ENCODE measurements at regions of chr20 and their contacts with region 1.

Region 1: DNA sequence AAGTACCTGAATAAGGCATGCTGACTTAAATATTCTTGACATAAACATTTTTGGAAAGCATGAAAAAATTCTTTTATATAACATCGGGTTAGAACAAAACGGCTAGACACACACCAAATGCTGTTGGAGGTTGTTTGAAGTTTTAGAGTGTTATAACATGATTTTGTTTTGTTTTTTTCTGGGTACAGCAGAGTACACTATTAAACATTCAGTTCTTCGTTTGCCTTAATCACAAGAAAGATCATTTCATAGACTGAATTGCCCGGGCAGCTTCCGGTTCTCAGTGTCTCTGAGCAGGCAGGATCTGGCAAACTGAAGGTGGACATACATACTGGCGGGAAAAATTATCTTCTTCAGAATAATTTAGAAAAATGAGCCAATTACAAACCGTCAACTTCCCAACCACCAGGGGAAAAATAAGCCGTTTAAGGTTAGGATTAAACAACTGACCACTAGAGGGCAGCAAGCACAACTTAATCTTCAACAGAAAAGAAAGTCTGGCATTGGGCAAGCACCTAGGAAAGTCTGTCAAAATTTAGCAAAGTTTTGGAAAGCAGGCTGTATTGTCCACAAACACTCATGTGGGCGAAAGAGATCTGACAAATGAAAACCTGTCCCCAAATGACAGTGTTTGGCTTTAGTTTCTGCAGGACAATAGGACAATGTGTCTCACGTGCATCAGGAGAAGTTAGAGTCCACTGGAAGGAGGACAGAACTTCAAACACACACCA is 15.0 kb downstream of the ZNF217 start:
- DNase-seq: no peak
- ATAC-seq: peak; percentile 81
- H3K4me3 ChIP-seq: no peak overlapping the region
- H3K27ac ChIP-seq: no peak overlapping the region
- H3K4me1 ChIP-seq: no peaks in the 10 kb centered on the region
- H3K27me3 ChIP-seq: no peaks in the 10 kb centered on the region

Region 2: DNA sequence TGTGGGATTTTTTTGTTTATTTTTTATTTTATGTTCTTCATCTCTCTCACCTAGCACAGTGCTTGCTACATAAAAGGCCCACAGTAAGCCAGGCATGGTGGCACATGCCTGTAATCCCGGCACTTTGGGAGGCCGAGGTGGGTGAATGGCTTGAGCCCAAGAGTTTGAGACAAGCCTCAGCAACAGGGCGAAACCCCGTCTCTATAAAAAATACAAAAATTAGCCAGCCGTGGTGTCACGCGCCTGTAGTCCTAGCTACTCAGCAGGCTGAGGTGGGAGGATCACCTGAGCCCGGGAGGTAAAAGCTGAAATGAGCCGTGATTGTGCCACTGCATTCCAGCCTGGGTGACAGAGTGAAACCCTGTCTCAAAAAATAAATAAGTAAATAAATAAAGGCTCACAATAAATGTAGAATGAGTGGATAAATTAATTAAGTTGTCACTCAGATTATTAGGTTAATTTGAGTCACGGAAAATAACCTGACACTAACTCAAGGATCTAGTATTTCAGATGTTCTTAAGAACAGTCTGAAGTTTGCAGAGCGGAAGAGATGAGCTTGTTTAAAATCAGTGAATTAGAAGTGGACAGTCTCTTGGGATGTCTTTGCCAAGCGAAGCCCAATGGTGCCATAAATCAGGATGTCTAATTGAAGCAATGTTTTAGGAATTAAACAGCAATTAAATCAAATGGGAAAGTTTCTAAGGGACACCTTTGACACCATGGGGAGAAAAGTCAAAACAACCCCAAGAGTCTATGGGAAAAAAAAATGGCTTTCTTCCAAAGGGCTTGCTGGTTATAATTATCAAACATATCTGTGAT is 199.4 kb before region 1 on chr20:
- intact Hi-C with region 1: no loop called
- DNase-seq: no peak
- ATAC-seq: no peak
- H3K4me3 ChIP-seq: no peak overlapping the region
- H3K27ac ChIP-seq: no peak overlapping the region
- H3K4me1 ChIP-seq: no peaks in the 10 kb centered on the region
- H3K27me3 ChIP-seq: no peaks in the 10 kb centered on the region

Region 3: GRCh38 chr20:53828682-53829254 is 250.1 kb after region 1 on chr20:
- intact Hi-C with region 1: loop called in 1 of 2 experiments (anchors 10 kb)
- DNase-seq: no peak
- ATAC-seq: peak; percentile 84
- H3K4me3 ChIP-seq: peak overlapping the region; percentile 51 to 67
- H3K27ac ChIP-seq: peak overlapping the region; percentile 90 to 95
- H3K4me1 ChIP-seq: peaks cover 0 to 4% of the 10 kb centered on the region in 2 donors
- H3K27me3 ChIP-seq: no peaks in the 10 kb centered on the region

Region 4: GRCh38 chr20:53915446-53916172 is 337.0 kb after region 1 on chr20:
- intact Hi-C with region 1: loop called (anchors 5 kb)
- DNase-seq: peak; percentile 97 to 99
- ATAC-seq: peak; percentile 96
- H3K4me3 ChIP-seq: peak overlapping the region; percentile 20 to 75
- H3K27ac ChIP-seq: peak overlapping the region in 1 of 2 donors; percentile 52
- H3K4me1 ChIP-seq: no peaks in the 10 kb centered on the region
- H3K27me3 ChIP-seq: no peaks in the 10 kb centered on the region

Region 5: DNA sequence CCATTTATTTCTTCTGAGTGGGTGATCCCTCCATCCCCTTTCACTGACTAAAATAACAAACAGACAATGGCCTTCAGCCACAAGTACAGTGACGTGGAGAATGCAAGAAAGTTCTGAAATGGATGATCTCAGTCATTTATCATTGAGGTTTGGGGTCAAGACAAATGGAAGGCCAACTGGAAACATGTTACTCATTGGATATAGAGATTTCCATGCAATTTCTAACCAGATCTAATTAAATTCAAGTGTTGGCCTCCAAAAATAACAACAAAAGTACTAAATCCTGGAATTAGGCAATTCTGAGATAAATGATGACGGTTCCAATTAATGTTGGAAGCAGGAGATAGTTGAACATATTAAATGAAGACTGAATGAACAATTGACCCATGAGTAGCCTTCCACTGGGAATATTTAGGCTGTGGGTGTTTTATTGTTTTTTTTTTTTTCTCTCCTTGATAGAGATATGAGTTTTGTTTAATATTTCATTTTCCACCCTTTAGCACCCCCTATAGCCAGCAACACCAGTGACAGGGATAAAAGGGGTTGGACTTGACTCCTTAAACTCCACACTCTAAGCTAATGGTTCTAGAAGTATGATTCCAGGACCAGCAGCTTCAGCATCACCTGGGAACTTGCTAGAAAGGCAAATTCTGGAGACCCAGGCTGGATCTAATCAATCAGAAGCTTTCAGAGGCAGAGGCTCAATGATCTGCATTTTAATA is 379.0 kb after region 1 on chr20:
- intact Hi-C with region 1: no loop called
- DNase-seq: no peak
- ATAC-seq: peak; percentile 60
- H3K4me3 ChIP-seq: no peak overlapping the region
- H3K27ac ChIP-seq: no peak overlapping the region
- H3K4me1 ChIP-seq: no peaks in the 10 kb centered on the region
- H3K27me3 ChIP-seq: no peaks in the 10 kb centered on the region

Region 6: DNA sequence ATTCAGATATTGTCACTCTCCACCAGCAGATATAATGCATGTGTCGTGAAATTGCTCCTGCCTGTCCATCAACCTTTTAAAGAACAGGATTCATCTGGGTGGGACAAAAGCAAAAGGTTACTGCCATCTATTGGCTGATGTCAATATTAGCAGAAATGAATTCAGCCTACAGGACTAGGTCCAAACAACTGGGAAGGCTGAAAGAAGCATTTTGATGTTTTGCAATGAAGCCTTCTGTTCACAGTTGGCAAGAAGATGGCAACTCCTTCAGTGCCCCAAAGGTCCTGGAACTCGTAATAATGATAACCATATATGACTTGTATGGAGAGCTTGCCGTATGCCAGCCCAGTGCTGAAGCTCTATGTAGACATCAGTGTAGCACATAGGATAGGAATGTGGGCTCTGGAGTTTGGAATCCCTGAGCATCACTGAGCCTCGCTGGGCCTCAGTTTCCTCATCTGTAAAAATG is 484.2 kb after region 1 on chr20:
- intact Hi-C with region 1: loop called (anchors 5 kb)
- DNase-seq: no peak
- ATAC-seq: peak; percentile 74
- H3K4me3 ChIP-seq: no peak overlapping the region
- H3K27ac ChIP-seq: no peak overlapping the region
- H3K4me1 ChIP-seq: no peaks in the 10 kb centered on the region
- H3K27me3 ChIP-seq: no peaks in the 10 kb centered on the region

Region 7: DNA sequence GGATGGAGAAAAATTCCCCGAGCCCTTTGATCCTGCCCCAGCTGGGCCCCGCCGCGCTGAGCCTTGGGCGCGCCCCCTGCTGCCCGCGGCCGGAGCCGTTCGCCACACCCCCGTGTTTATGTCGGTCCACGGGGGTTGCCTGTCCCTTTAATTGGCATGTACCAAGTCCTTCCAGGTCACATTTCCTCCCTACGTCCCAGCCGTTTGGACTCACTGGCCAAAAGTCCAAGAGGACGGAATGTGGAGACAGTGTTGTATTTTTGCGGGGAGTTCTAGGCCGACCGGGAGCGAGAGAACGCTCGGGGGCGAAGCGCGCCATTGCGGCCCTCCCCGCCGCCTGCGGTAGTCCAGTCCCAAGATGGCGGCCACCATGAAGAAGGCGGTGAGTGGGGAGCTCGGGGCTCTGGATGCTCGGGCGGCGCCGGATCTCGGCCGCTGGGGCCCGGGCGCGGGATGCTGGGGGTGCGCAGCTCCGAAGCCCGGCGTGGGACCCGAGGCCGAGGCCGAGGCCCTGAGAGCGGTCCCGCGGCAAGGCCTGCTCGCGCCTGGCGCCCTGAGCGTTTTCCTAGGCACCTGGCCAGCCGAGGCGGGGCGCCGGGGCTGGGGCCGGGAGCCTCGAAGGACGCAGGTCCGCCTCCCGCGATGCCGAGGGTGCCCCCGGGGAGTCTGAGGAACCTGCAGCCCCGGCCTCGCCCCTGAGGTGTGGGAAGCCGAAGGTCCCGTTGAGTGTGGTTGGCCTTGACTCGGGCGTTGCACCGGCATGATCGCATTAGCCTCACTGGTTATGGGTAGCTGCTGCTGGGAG is 629.3 kb after region 1 on chr20 and contains the start of gene PFDN4:
- intact Hi-C with region 1: loop called in 1 of 2 experiments (anchors 10 kb)
- DNase-seq: peak; percentile 87 to 93
- ATAC-seq: peak; percentile 95
- H3K4me3 ChIP-seq: peak within 1 kb of the TSS; percentile 62 to 92
- H3K27ac ChIP-seq: peak within 1 kb of the TSS; percentile 85 to 86
- H3K4me1 ChIP-seq: peaks cover 1 to 10% of the 10 kb centered on the region in 2 donors
- H3K27me3 ChIP-seq: no peaks in the 10 kb centered on the region
- total RNA-seq, gene PFDN4: 19.8 to 22.0 TPM

Measured in aorta (tissue), 5 donors.